GM10248 (cell line): ENCODE measurements at regions of chr1 and their contacts with region 1.

Region 1: GRCh38 chr1:39609618-39610331 is 29.7 kb downstream of the HEYL start:
- DNase-seq: peak; percentile 88
- CTCF ChIP-seq: peak; percentile 65

Region 2: DNA sequence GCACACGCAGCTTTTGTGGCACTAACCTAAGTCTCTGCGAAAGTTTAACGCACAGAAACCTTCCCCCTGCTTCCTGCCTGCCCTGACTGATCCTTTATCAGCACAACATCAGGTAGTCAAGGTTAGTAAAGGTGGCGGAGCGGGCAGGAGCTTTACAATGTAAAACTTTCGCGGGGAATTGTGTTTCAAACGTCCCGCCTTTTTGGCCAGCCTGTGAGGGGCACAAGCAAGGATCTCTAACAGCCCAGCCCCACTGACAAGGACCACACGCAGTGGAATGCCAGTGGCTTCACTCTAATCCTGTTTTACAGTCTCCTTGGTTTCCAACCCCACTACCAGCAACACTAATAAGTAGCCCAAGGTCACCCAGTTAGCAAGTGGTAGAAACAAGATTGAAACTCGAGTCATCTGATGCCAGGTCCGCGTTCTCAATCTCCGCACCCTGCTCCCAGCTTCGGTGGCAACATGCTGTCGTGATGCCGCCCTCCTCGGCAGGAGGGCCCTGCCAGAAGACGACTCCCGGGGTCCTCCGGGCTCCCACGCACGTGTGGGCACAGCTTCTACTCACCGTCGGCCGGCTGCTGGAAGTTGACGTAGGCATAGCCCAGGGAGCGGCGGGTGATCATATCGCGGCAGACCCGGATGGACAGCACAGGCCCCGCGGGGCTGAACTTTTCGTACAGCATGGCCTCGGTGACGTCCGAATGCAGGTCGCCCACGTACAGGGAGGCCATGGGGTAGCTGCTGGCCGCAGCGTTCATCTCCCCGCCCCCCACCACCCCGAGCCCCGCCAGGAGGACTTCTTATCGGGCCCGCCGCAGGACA is 34.4 kb before region 1 on chr1:
- CTCF ChIA-PET with region 1: interaction called, 11 read pairs
- POLR2A ChIA-PET with region 1: interaction called, 11 read pairs
- DNase-seq: peak; percentile 67
- CTCF ChIP-seq: no peak

Region 3: DNA sequence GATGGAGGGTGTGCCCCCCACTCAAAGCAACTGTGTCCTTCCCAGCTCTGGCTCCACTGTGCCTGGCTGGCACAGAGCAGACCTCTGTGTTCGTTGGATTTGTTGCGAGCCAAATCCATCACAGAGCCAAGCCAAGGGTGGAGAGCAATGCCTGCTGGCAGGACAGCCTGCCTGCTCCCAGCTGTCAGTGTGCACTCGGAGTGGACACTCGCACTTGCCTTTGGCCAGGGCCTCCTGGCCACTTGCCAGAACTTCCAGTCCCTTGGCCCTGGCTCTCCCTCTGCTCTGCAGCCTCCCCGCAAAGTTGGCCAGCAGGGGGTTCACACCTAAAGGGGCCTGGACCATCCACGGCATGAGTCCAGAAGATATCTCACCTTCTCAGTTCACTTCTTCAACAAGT is 13.3 kb after region 1 on chr1:
- CTCF ChIA-PET with region 1: interaction called, 33 read pairs
- POLR2A ChIA-PET with region 1: no interaction called
- DNase-seq: no peak
- CTCF ChIP-seq: no peak

Region 4: GRCh38 chr1:39639305-39640130 is 29.7 kb after region 1 on chr1 and contains the start of gene HEYL:
- CTCF ChIA-PET with region 1: interaction called, 10 read pairs
- POLR2A ChIA-PET with region 1: no interaction called
- DNase-seq: peak; percentile 71
- CTCF ChIP-seq: peak; percentile 29

Region 5: GRCh38 chr1:39653546-39654031 is 43.8 kb after region 1 on chr1:
- CTCF ChIA-PET with region 1: interaction called, 307 read pairs
- POLR2A ChIA-PET with region 1: no interaction called
- DNase-seq: peak; percentile 75
- CTCF ChIP-seq: peak; percentile 88

Region 6: DNA sequence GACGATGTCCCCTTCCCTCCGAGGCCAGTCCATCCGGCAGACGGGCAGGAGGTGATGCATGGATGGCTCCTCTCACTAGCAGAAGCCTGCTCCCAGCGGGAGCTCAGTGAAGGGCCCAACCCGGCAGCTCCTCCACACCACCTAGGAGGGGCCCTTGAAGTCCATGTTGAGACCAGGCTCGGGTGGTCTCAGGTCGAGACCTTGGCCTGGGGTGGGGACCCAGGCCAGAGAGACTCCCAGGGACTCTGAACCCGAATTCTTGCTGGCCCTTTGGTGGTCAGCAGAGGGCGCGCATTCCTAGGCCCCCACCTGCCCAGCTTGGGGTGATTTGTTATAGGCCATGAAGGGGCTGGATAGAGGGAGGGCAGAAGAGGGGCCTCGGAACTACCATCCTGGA is 62.8 kb after region 1 on chr1:
- CTCF ChIA-PET with region 1: interaction called, 46 read pairs
- POLR2A ChIA-PET with region 1: no interaction called
- DNase-seq: peak; percentile 61
- CTCF ChIP-seq: peak; percentile 55